Astrocyte of the cerebellum (primary cell): ENCODE measurements at regions of chr9 and their contacts with region 1.

Region 1: DNA sequence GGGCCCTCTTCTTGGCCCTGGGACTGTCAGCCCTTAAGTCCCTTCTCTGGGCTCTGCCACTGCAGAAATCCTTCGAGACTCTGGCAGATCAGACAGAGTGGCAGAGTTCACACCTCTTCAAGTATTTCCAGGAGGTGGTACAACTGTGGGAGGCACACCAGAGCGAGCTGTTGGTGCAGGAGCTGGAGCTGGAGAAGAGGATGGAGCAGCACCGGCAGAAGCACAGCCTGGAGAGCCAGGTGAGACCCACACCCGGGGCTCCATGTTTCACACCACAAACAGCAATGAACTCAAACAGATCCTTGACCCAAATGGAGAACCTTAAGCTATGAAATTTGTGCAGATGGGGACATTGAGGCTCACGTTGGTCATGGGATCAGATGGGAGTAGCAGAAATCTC is 17.5 kb downstream of the CCDC180 start:
- DNase-seq: no peak
- H3K4me3 ChIP-seq: no peak overlapping the region
- CTCF ChIP-seq: no peak

Region 2: GRCh38 chr9:97284798-97285197 is 40.2 kb before region 1 on chr9:
- in situ Hi-C with region 1: loop called (anchors 5 kb)
- DNase-seq: no peak
- H3K4me3 ChIP-seq: no peak overlapping the region
- CTCF ChIP-seq: no peak